Activated CD4-positive, alpha-beta T cell treated with anti-CD3 and anti-CD28 coated beads, Interleukin-2, amount 10 ng/mL, durations not matched to agents 24 days and 14 days (primary cell): ENCODE measurements at regions of chrX and their contacts with region 1.

Region 1: DNA sequence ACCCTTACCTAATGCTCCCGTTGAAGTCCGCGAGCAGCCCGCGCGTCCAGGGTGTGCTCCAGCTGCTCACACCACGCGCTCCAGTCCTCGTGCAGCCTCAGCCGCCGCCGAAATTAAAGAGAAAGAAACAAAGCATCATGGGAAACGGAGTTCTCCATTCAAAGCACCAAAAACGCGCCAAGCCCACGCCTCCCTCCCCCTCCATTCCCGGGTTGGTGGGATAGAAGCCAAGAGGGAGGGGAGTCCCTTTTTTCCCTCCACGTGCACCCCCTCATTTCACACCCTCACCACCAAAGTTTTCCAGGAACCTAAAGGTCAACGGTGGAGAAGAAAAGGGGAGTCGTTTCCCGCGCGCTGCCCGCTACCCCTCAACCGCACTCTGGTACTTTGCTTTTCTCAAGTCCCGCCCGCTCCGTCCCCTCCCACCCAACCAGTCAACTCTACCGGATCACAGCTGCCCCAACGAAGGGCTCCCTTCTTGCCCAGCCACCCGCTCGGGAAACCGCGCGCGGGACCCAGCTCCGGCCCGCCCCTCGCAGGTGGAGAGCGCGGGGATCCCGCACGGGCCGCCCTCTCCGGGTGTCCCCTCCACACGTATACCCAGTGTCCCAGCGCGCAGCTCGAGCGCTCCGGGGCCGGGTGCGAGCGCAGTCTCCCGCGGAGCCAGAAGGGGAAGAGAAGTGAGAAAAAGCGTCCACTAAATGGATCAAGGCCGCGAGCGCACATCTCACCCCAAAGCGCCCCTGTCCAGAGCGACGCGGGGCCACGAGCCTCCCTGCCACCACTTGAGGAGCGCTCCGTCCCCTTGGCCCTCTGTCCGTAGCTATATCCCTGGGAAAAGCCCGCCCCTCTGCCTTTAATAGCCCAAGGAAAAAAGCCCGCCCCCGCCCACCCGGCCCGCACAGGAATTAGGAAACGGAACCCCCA is 65.1 kb upstream of the CCDC160 start:
- DNase-seq: peak; percentile 84
- H3K4me3 Mint-ChIP-seq: peak overlapping the region; percentile 98
- H3K27ac Mint-ChIP-seq: peak overlapping the region; percentile 98
- H3K4me1 Mint-ChIP-seq: peaks cover 19% of the 10 kb centered on the region
- H3K27me3 Mint-ChIP-seq: peaks cover 2% of the 10 kb centered on the region

Region 2: DNA sequence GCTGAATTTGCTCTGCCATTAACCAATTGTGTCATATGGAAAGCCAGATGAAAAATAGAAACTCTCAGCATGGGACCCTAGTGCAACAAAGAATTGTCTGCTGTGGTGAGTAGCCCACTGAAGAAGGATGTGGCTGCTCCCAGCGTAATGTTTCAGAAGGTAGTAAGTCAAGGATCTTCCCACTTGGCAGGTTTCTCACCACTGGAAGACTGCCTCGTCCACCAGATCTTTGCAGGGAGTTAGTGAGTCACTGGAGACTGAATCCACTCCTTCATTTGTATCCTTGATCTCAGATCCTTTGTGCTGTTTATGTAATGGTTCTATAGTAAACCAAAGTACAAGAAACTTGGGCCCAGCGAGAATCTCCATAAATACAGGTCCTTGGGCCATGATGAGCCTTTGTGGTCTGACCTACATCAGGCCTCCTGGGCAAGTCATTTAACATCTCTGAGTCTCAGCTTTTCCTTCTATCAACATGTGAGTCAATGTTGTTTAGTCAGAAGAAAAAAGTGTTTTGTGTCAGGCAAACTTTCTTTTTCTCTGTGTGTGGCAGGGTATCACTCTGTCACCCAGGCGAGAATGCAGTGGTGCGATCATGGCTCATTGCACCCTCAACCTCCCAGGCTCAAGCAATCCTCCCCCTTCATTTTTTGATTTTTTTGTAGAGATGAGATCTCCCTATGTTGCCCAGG is 13.0 kb before region 1 on chrX:
- intact Hi-C with region 1: loop called (anchors 1 kb)
- DNase-seq: no peak
- H3K4me3 Mint-ChIP-seq: no peak overlapping the region
- H3K27ac Mint-ChIP-seq: peak overlapping the region; percentile 83
- H3K4me1 Mint-ChIP-seq: peaks cover 23% of the 10 kb centered on the region
- H3K27me3 Mint-ChIP-seq: no peaks in the 10 kb centered on the region

Region 3: GRCh38 chrX:134186362-134187121 is 14.6 kb after region 1 on chrX:
- intact Hi-C with region 1: loop called (anchors 1 kb)
- DNase-seq: peak; percentile 92
- H3K4me3 Mint-ChIP-seq: peak overlapping the region; percentile 86
- H3K27ac Mint-ChIP-seq: peak overlapping the region; percentile 85
- H3K4me1 Mint-ChIP-seq: peaks cover 22% of the 10 kb centered on the region
- H3K27me3 Mint-ChIP-seq: no peaks in the 10 kb centered on the region

Region 4: GRCh38 chrX:134251241-134251640 is 79.3 kb after region 1 on chrX:
- intact Hi-C with region 1: loop called (anchors 1 kb)
- DNase-seq: no peak
- H3K4me3 Mint-ChIP-seq: no peak overlapping the region
- H3K27ac Mint-ChIP-seq: no peak overlapping the region
- H3K4me1 Mint-ChIP-seq: peaks cover 5% of the 10 kb centered on the region
- H3K27me3 Mint-ChIP-seq: no peaks in the 10 kb centered on the region

Region 5: DNA sequence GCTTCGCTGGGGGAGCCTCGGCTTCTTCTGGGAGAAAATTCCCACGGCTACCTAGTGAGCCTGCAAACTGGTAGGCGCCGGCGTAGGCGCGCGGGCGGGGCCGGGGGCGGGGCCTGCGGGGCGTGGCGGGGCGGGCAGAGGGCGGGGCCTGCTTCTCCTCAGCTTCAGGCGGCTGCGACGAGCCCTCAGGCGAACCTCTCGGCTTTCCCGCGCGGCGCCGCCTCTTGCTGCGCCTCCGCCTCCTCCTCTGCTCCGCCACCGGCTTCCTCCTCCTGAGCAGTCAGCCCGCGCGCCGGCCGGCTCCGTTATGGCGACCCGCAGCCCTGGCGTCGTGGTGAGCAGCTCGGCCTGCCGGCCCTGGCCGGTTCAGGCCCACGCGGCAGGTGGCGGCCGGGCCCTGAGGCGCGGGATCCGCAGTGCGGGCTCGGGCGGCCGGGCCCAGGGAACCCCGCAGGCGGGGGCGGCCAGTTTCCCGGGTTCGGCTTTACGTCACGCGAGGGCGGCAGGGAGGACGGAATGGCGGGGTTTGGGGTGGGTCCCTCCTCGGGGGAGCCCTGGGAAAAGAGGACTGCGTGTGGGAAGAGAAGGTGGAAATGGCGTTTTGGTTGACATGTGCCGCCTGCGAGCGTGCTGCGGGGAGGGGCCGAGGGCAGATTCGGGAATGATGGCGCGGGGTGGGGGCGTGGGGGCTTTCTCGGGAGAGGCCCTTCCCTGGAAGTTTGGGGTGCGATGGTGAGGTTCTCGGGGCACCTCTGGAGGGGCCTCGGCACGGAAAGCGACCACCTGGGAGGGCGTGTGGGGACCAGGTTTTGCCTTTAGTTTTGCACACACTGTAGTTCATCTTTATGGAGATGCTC is 288.3 kb after region 1 on chrX and contains the start of gene HPRT1:
- intact Hi-C with region 1: loop called (anchors 5 kb)
- DNase-seq: peak; percentile 94
- H3K4me3 Mint-ChIP-seq: peak within 1 kb of the TSS; percentile 94
- H3K27ac Mint-ChIP-seq: peak within 1 kb of the TSS; percentile 91
- H3K4me1 Mint-ChIP-seq: peaks cover 9% of the 10 kb centered on the region
- H3K27me3 Mint-ChIP-seq: no peaks in the 10 kb centered on the region
- total RNA-seq, gene HPRT1: 121 and 128 TPM in 2 replicates

Region 6: DNA sequence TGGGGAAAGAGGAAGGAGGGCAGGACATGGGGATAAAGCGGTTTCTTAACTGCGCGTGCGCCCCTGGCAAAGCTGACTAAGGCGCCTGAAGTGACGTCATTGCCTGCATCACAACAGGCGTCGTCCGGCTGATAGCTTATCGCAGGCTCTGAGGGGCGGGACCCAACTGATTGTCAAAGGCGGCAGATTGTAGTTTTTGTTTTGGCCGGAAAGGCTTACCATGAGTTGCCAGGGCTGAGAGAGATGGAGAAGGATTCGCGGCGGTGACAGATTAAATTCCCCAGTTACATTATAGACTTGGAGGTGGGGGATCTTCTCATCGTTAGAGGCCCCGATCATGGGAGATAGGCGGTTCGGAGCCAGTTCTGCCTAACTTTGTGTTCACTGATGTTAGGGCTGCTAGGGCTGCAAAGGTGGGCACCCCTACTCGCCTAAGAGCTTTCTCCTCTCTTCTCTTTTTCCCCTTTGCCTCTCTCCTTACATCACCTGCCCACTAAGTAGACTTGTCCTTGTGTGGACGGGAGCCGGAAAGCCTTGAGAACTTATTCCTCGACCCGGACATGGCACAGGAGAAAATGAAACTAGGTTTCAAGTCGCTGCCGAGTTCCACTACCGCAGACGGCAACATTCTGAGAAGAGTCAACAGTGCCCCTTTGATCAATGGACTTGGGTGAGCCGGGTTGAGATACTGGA is 635.3 kb after region 1 on chrX:
- intact Hi-C with region 1: loop called (anchors 10 kb)
- DNase-seq: peak; percentile 96
- H3K4me3 Mint-ChIP-seq: peak overlapping the region; percentile 94
- H3K27ac Mint-ChIP-seq: peak overlapping the region; percentile 99
- H3K4me1 Mint-ChIP-seq: peaks cover 16% of the 10 kb centered on the region
- H3K27me3 Mint-ChIP-seq: no peaks in the 10 kb centered on the region